K562 (cell line): ENCODE measurements at regions of chr22 and their contacts with region 1.

Region 1: GRCh38 chr22:22737590-22737989 is 93.2 kb downstream of the GGTLC2 start:
- DNase-seq: no peak
- ATAC-seq: no peak
- H3K4me3 ChIP-seq: no peak overlapping the region
- H3K27ac ChIP-seq: no peak overlapping the region
- H3K4me1 ChIP-seq: peaks cover 0 to 15% of the 10 kb centered on the region in 2 experiments; a peak in 1 of 5 replicates
- H3K27me3 ChIP-seq: peaks cover 5 to 23% of the 10 kb centered on the region in 2 experiments; a peak in 4 of 5 replicates
- CTCF ChIP-seq: no peak
- EP300 ChIP-seq: no peak
- POLR2A ChIP-seq: no peak
- RAD21 ChIP-seq: no peak

Region 2: GRCh38 chr22:22753526-22754267 is 16.1 kb after region 1 on chr22:
- CTCF ChIA-PET with region 1: no interaction called
- POLR2A ChIA-PET with region 1: interaction called, 41 read pairs
- in situ Hi-C with region 1: no loop called
- intact Hi-C with region 1: loop called (anchors 2 kb)
- DNase-seq: peak; percentile 96 to 100 (median 100)
- ATAC-seq: peak; percentile 97
- H3K4me3 ChIP-seq: no peak overlapping the region
- H3K27ac ChIP-seq: no peak overlapping the region
- H3K4me1 ChIP-seq: no peaks in the 10 kb centered on the region
- H3K27me3 ChIP-seq: peaks cover 2 to 20% of the 10 kb centered on the region in 2 experiments; a peak in 3 of 5 replicates
- CTCF ChIP-seq: peak in 1 of 3 experiments; percentile 100; a peak in 2 of 6 replicates
- EP300 ChIP-seq: no peak; the same call in 1 of the 2 replicates
- POLR2A ChIP-seq: no peak
- RAD21 ChIP-seq: peak in 1 of 2 experiments; percentile 98; a peak in 2 of 4 replicates

Region 3: DNA sequence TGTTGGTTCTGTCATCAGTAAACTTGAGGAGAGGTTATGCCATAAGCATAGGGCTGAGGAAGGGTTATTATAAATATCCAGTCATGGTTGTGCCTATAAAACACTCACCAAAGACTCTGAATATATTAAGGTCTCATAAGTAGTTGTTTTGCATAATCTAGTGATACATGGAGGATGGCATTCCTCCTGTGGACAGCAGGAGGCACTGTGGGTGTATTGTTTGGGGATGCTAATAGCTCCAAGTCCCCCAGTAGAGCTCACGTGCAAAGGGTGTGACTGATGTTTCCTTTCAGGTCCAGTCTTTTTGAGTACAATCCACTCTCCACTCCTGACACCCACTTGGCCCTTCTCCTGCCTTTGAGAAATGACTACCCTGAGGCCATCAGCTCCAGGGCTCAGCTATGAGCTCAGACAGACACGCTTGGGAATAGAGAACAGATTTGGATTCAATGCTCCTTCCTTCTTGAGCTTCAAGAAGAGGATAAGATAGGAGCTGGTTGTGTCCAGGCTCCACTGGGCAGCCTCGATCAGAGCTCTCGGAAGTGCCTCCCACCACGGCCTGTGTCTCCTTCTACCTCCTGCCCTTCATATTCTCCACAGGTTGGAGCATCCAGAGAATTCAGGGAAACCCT is 64.9 kb after region 1 on chr22:
- CTCF ChIA-PET with region 1: no interaction called
- POLR2A ChIA-PET with region 1: no interaction called
- in situ Hi-C with region 1: no loop called
- intact Hi-C with region 1: no loop called
- DNase-seq: peak; percentile 84 to 94 (median 91)
- ATAC-seq: peak; percentile 90
- H3K4me3 ChIP-seq: no peak overlapping the region
- H3K27ac ChIP-seq: no peak overlapping the region
- H3K4me1 ChIP-seq: no peaks in the 10 kb centered on the region
- H3K27me3 ChIP-seq: peaks cover 8 to 37% of the 10 kb centered on the region in 2 experiments; a peak in 3 of 5 replicates
- CTCF ChIP-seq: no peak
- EP300 ChIP-seq: no peak
- POLR2A ChIP-seq: no peak
- RAD21 ChIP-seq: no peak